ENCODE measurements at regions of chr15 and their contacts with region 1.

Region 1: DNA sequence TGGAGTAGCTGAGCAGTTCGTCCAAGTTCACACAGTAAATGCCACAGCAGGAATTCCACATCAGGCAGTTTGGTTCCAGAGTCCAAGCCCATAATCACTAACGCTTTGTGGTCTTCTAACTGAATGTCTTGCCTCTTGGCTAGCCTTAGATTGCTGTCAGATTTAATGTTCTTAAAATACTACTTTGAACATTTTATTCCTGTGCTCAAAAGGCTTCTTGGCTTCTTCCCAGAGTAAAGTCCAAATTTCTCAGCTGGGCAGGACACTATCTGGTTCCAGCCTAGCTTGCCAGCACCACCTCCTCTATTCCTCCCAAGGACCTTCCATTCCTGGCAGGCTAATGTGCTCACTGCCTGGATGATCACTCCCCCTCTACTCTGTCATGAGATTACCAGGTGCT is 256.9 kb downstream of the SQOR start:
- DNase-seq: no peak
- H3K4me3 ChIP-seq: no peak overlapping the region
- H3K27ac ChIP-seq: no peak overlapping the region
- H3K4me1 ChIP-seq: no peaks in the 10 kb centered on the region
- H3K27me3 ChIP-seq: no peaks in the 10 kb centered on the region
- CTCF ChIP-seq: no peak

Region 2: GRCh38 chr15:45759936-45760335 is 131.8 kb before region 1 on chr15:
- CTCF ChIA-PET with region 1: no interaction called
- POLR2A ChIA-PET with region 1: no interaction called
- intact Hi-C with region 1: no loop called
- DNase-seq: no peak
- H3K4me3 ChIP-seq: no peak overlapping the region
- H3K27ac ChIP-seq: no peak overlapping the region
- H3K4me1 ChIP-seq: no peaks in the 10 kb centered on the region
- H3K27me3 ChIP-seq: no peaks in the 10 kb centered on the region
- CTCF ChIP-seq: no peak

Region 3: GRCh38 chr15:45958922-45959321 is 67.2 kb after region 1 on chr15:
- CTCF ChIA-PET with region 1: no interaction called
- POLR2A ChIA-PET with region 1: no interaction called
- intact Hi-C with region 1: loop called (anchors 10 kb)
- DNase-seq: no peak
- H3K4me3 ChIP-seq: no peak overlapping the region
- H3K27ac ChIP-seq: no peak overlapping the region
- H3K4me1 ChIP-seq: no peaks in the 10 kb centered on the region
- H3K27me3 ChIP-seq: no peaks in the 10 kb centered on the region
- CTCF ChIP-seq: no peak

Measured in A673 (cell line).